PC-9 (cell line): ENCODE measurements at regions of chr2 and their contacts with region 1.

Region 1: DNA sequence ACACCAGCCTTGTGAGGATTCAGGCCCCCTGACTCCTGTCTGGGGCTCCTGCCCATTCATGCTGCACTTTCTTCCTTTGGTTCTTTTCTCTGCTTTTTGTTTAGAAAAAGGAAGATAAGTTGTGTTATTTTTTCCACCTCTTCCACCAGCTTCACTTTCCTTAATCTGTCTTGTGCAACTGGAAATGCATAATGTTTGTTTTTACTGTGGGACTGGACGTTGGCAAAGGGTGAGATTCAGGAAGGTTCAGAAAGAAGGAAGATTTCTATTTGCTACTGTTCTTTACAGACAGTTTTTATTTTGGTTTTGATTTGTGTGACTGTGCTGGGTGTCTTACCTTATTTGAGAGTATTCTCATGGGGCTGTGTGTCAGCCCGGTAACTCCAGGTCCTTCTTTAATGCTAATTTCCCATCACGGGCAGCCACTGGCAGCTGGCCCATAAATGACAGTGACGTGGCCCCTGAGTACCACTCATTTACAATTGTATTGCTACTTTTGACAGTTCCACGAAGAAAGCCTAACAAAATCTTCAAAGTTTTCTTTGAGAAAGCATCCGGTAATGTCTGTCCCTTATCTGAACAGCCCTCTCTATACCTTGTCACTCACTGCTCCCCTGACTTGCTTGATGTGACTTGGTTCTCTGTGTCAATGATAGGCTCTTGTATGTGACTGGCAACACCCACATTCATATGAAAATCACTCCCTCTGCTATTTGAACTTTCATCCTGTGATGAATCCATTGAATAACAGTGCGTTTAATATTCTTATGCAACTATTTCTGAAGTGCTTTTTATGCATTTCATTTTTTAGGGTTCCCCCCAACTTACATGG is 32.7 kb downstream of the RHBDD1 start:
- DNase-seq: no peak
- H3K4me3 ChIP-seq: no peak overlapping the region
- H3K27ac ChIP-seq: no peak overlapping the region
- H3K4me1 ChIP-seq: no peaks in the 10 kb centered on the region
- H3K27me3 ChIP-seq: no peaks in the 10 kb centered on the region
- CTCF ChIP-seq: no peak

Region 2: GRCh38 chr2:226758921-226759640 is 109.5 kb before region 1 on chr2:
- CTCF ChIA-PET with region 1: no interaction called
- POLR2A ChIA-PET with region 1: no interaction called
- intact Hi-C with region 1: no loop called
- DNase-seq: no peak
- H3K4me3 ChIP-seq: no peak overlapping the region
- H3K27ac ChIP-seq: 0 out of 2 replicates have a peak overlapping the region, but pooled peaks have one; percentile 5
- H3K4me1 ChIP-seq: peaks cover 18% of the 10 kb centered on the region
- H3K27me3 ChIP-seq: no peaks in the 10 kb centered on the region
- CTCF ChIP-seq: no peak

Region 3: DNA sequence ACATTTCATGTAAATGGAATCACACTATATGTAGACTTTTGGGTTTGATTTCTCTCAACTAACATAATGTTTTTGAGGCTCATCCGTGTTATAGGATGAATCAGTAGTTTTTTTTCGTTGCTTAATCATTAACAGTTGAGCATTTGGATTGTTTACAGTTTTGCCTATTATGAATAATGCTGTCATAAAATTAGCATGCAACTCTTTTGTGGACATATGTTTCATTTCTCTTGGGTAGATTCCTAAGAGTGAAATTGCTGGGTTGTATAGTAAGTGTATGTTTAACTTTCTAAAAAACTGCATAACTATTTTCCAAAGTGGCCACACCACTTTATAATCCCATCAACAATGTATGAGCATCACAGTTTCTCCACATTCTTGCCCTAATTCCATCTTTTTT is 40.4 kb before region 1 on chr2:
- CTCF ChIA-PET with region 1: no interaction called
- POLR2A ChIA-PET with region 1: no interaction called
- intact Hi-C with region 1: no loop called
- DNase-seq: no peak
- H3K4me3 ChIP-seq: no peak overlapping the region
- H3K27ac ChIP-seq: no peak overlapping the region
- H3K4me1 ChIP-seq: peaks cover under 1% of the 10 kb centered on the region
- H3K27me3 ChIP-seq: no peaks in the 10 kb centered on the region
- CTCF ChIP-seq: no peak

Region 4: DNA sequence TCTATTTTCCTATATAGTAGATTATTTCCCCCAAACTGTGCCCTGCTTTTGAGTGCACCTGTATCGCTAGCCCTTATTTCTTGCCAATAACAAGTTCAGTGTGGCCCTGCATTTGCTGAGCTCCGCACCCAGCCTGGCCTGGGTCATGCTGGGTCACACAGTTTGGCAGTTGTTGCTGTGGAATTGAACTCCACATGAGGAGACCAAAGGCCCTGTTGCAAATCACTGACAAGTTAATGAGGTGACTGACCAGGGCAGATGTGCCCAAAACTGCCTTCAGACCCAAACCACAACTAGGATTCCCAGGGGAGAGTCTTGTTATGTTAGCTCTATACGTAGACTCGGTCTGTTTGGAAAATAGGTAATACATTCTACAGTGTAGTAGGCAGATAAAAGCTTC is 264.4 kb after region 1 on chr2:
- CTCF ChIA-PET with region 1: no interaction called
- POLR2A ChIA-PET with region 1: interaction called, 18 read pairs
- intact Hi-C with region 1: no loop called
- DNase-seq: no peak
- H3K4me3 ChIP-seq: no peak overlapping the region
- H3K27ac ChIP-seq: no peak overlapping the region
- H3K4me1 ChIP-seq: no peaks in the 10 kb centered on the region
- H3K27me3 ChIP-seq: no peaks in the 10 kb centered on the region
- CTCF ChIP-seq: no peak